Activated CD4-positive, alpha-beta T cell treated with anti-CD3 and anti-CD28 coated beads for 36 hours (primary cell): ENCODE measurements at regions of chr6 and their contacts with region 1.

Region 1: GRCh38 chr6:121460170-121460569 is 24.7 kb downstream of the GJA1 start:
- DNase-seq: no peak
- ATAC-seq: no peak
- H3K4me3 Mint-ChIP-seq: no peak overlapping the region
- H3K27ac Mint-ChIP-seq: no peak overlapping the region
- H3K4me1 Mint-ChIP-seq: no peaks in the 10 kb centered on the region
- H3K27me3 Mint-ChIP-seq: no peaks in the 10 kb centered on the region

Region 2: DNA sequence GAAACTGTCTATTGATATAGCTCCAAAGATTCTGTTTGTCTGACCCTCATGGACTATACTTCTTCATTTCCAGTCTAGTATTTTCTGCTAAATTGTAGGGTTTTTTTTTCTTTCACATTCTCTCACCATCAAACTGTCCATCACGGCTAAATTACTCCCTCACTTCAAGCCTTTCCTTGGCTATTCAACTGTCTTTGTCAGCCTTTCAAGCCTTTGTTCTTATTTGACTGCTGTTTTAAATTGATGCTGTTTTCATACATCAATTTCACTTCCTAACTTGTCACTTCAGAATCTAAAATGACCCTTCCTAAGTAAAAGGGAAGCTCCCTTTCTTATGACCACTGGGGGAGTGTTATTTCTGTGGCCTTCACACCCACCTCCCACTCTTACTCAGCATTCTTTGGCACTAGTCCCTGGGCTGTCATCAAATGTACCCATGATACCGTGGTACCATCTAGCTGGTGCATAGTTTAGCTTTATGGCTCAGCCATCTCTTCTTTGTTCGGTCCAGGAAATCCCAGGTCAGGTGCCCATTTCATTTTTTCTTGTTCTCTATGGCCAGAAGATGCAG is 16.1 kb before region 1 on chr6:
- CTCF ChIA-PET with region 1: no interaction called
- POLR2A ChIA-PET with region 1: no interaction called
- intact Hi-C with region 1: loop called in 1 of 2 experiments (anchors 1 kb)
- DNase-seq: no peak
- ATAC-seq: no peak
- H3K4me3 Mint-ChIP-seq: no peak overlapping the region
- H3K27ac Mint-ChIP-seq: no peak overlapping the region
- H3K4me1 Mint-ChIP-seq: no peaks in the 10 kb centered on the region
- H3K27me3 Mint-ChIP-seq: peaks cover 8% of the 10 kb centered on the region

Region 3: GRCh38 chr6:121593011-121593690 is 133.0 kb after region 1 on chr6:
- CTCF ChIA-PET with region 1: no interaction called
- POLR2A ChIA-PET with region 1: no interaction called
- intact Hi-C with region 1: no loop called
- DNase-seq: no peak
- ATAC-seq: no peak
- H3K4me3 Mint-ChIP-seq: no peak overlapping the region
- H3K27ac Mint-ChIP-seq: no peak overlapping the region
- H3K4me1 Mint-ChIP-seq: no peaks in the 10 kb centered on the region
- H3K27me3 Mint-ChIP-seq: no peaks in the 10 kb centered on the region